ENCODE measurements at regions of chr3 and their contacts with region 1.

Region 1: DNA sequence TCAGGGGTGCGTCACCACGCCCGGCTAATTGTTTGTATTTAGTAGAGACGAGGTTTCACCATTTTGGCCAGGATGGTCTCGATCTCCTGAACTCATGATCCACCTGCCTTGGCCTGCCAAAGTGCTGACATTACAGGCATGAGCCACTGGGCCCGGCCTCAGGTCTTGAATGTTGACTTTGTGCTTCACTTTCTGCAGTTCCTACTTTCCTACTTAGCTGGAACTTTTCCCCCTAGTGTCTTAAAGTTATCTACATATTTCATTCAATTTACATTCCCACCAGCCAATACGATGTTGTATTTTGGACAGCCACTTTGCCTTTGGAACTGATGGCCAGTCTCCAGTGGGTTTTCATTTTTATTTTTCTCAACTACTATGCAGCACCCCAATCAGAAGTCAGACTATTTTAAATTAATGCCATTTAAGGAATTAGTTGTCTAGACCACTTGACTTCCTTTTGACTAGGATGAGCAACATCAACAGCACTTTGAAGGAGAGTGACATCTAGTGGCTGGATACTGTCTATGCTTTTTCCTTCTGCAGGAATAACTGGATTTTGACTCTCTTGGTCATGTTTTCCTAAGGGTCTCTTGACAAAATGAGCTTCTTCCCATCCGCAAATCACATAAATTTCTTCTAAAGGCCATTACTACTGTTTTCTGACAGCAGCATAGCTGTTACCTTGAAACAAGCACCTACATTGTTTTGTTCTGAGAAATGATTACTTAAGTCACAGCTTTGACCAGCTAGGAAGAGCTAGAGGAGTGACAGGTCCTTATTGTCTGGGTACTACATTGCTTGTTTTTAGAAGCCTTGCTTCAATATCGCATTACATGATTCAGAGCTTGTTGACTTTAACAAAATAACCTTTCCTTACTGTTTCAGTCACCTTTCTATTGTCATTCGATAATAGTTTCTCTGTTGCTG is 140.2 kb downstream of the ITPR1 start:
- DNase-seq: peak; percentile 40 to 72 (median 68)
- H3K4me3 ChIP-seq: no peak overlapping the region
- H3K4me3 Mint-ChIP-seq: no peak overlapping the region
- H3K27ac ChIP-seq: no peak overlapping the region
- H3K27ac Mint-ChIP-seq: peak overlapping the region in 4 of 7 donors; percentile 42 to 75 (median 53)
- H3K4me1 ChIP-seq: peaks cover 3 to 14% of the 10 kb centered on the region in 2 donors
- H3K4me1 Mint-ChIP-seq: peaks cover 15% of the 10 kb centered on the region
- H3K27me3 ChIP-seq: no peaks in the 10 kb centered on the region
- H3K27me3 Mint-ChIP-seq: peaks cover 0 to 2% (median 0%) of the 10 kb centered on the region in 3 donors
- CTCF ChIP-seq: peak; percentile 87

Region 2: DNA sequence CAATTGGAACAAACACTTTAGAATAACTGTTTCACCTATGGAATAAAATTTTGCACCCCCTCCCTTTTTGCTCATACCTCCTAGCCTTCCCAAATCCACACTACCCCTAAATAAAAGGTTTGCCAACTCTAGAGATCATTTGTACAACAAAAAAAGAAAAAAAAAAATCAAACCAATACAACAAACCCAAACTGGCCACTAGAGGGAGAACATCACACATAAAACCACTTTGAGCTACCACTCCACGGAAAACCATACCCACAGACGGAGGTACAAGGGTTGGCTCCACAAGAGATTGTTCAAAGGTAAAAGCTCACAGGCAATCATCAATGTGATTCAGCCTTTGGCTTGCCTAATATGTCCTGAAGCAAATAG is 282.6 kb before region 1 on chr3:
- intact Hi-C with region 1: loop called (anchors 2 kb)
- DNase-seq: peak; percentile 51 to 66 (median 65)
- H3K4me3 ChIP-seq: peak overlapping the region; percentile 55 to 99 (median 76)
- H3K4me3 Mint-ChIP-seq: peak overlapping the region; percentile 65 to 77
- H3K27ac ChIP-seq: peak overlapping the region in 1 of 2 donors; percentile 79
- H3K27ac Mint-ChIP-seq: peak overlapping the region in 4 of 7 donors; percentile 31 to 70 (median 64)
- H3K4me1 ChIP-seq: peaks cover 8% of the 10 kb centered on the region in 2 donors
- H3K4me1 Mint-ChIP-seq: peaks cover 24% of the 10 kb centered on the region
- H3K27me3 ChIP-seq: no peaks in the 10 kb centered on the region
- H3K27me3 Mint-ChIP-seq: peaks cover 0 to 2% (median 0%) of the 10 kb centered on the region in 3 donors
- CTCF ChIP-seq: peak; percentile 87

Measured in CD14-positive monocyte (primary cell).